Caco-2 (cell line): ENCODE measurements at regions of chr1 and their contacts with region 1.

Region 1: GRCh38 chr1:28322194-28322593 is 6.6 kb upstream of the MED18 start:
- DNase-seq: peak; percentile 68 to 87
- H3K4me3 ChIP-seq: no peak overlapping the region
- H3K4me3 Mint-ChIP-seq: no peak overlapping the region
- H3K27ac Mint-ChIP-seq: no peak overlapping the region
- H3K4me1 ChIP-seq: peaks cover 15% of the 10 kb centered on the region
- H3K4me1 Mint-ChIP-seq: peaks cover 14% of the 10 kb centered on the region
- H3K27me3 ChIP-seq: no peaks in the 10 kb centered on the region
- H3K27me3 Mint-ChIP-seq: no peaks in the 10 kb centered on the region
- CTCF ChIP-seq: no peak

Region 2: DNA sequence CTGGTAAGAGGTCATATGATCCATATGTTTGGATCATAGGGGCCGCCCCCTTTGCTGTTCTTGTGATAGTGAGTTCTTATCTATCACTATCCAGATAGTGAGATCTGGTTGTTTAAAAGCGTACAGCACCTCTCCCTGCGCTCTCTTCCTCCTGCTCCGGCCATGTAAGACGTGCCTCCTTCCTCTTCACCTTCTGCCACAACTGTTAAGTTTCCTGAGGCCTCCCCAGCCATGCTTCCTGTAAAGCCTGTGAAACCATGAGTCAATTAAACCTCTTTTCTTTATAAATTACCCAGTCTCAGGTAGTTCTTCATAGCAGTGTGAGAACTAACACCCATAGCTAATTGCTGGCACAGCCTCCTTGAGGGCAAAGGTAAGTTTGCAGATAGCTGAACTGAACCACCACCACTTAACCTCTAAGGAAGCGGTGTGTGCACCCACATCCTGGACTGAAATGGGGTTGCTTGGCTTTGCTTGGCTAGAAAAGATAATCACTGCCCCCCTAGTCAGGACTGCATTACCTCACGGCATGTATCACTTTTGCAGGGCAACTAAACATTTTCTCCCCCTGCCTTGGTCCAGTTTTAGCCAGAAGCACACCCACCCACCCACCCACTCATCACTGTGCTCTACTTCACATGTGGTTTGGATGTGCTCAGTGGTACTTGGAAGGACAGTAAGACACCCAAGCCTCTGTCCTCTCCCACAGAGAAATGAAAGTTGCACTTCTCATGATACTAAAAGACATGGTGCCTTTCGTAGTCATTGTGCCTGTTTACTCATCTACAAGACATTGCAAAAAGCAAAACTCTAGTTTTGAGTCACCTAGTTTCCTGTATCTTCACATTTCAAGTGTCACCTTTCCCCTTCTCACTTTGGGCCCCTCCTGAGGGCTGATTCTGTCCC is 122.6 kb before region 1 on chr1:
- CTCF ChIA-PET with region 1: no interaction called
- POLR2A ChIA-PET with region 1: no interaction called
- intact Hi-C with region 1: no loop called
- DNase-seq: no peak
- H3K4me3 ChIP-seq: no peak overlapping the region
- H3K4me3 Mint-ChIP-seq: no peak overlapping the region
- H3K27ac Mint-ChIP-seq: peak overlapping the region; percentile 48
- H3K4me1 ChIP-seq: no peaks in the 10 kb centered on the region
- H3K4me1 Mint-ChIP-seq: peaks cover 6% of the 10 kb centered on the region
- H3K27me3 ChIP-seq: no peaks in the 10 kb centered on the region
- H3K27me3 Mint-ChIP-seq: no peaks in the 10 kb centered on the region
- CTCF ChIP-seq: no peak

Region 3: DNA sequence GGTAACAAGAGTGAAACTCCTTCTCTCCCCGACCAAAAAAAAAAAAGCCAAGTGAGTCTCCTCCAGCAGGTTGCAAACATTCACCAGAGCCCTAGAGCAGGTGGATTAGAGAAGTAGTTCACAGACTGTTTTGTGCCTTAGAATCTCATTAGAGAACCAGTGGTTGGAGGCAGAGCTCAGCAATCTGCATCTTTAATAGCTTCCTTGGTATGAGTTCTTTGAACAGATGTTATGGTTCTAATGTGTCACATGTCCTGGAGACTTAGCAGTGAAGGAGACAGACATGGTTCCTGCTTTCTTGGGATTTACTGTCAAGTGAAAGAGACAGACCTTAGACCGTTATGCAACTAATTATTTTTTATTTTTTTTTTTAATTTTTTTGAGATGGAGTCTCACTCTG is 36.1 kb before region 1 on chr1:
- CTCF ChIA-PET with region 1: no interaction called
- POLR2A ChIA-PET with region 1: no interaction called
- intact Hi-C with region 1: loop called (anchors 5 kb)
- DNase-seq: no peak
- H3K4me3 ChIP-seq: no peak overlapping the region
- H3K4me3 Mint-ChIP-seq: no peak overlapping the region
- H3K27ac Mint-ChIP-seq: no peak overlapping the region
- H3K4me1 ChIP-seq: peaks cover 16% of the 10 kb centered on the region
- H3K4me1 Mint-ChIP-seq: peaks cover 7% of the 10 kb centered on the region
- H3K27me3 ChIP-seq: no peaks in the 10 kb centered on the region
- H3K27me3 Mint-ChIP-seq: no peaks in the 10 kb centered on the region
- CTCF ChIP-seq: no peak

Region 4: DNA sequence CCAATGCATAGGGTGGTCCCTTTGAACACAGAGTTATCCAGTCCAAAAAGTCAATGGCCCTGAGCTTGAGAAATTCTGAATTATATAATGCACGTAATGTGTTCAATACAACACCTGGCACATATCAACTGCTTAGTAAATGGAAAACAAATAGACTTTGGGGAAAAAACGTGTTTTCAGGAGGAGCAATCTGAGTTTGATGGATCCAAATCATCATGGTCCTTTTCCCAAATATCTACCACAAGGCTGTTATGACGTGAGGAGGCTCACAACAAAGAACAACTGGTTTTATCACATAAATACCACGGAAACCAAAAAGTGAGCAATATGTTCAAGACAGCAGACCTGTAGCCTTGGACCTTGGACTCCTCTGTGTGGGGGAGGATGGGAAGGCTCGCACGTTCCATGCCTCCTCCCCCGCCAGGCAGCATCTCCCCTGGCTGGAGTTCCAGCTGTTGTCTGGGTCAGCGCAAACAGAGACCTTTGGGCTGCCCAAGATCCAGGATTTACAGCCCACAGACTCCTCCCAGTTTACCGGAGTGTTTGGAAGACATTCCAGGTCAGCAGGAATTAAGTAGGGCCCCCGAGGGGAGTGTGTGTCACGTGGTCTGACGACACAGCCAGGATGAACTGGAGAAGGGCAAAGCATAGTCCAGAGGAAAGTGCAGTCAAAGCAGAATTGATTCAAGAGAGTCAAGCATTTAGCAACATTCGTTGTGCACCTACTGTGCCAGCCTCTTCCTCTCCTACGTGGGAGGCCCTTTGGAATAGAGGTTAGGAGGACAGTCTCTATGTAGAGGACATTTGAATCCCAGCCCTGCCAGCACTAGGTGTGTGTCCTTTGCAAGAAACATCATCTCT is 25.6 kb before region 1 on chr1:
- CTCF ChIA-PET with region 1: no interaction called
- POLR2A ChIA-PET with region 1: interaction called, 3 read pairs
- intact Hi-C with region 1: loop called (anchors 2 kb)
- DNase-seq: peak; percentile 92 to 97
- H3K4me3 ChIP-seq: no peak overlapping the region
- H3K4me3 Mint-ChIP-seq: peak overlapping the region; percentile 56
- H3K27ac Mint-ChIP-seq: peak overlapping the region; percentile 93
- H3K4me1 ChIP-seq: peaks cover 17% of the 10 kb centered on the region
- H3K4me1 Mint-ChIP-seq: peaks cover 12% of the 10 kb centered on the region
- H3K27me3 ChIP-seq: no peaks in the 10 kb centered on the region
- H3K27me3 Mint-ChIP-seq: no peaks in the 10 kb centered on the region
- CTCF ChIP-seq: no peak

Region 5: DNA sequence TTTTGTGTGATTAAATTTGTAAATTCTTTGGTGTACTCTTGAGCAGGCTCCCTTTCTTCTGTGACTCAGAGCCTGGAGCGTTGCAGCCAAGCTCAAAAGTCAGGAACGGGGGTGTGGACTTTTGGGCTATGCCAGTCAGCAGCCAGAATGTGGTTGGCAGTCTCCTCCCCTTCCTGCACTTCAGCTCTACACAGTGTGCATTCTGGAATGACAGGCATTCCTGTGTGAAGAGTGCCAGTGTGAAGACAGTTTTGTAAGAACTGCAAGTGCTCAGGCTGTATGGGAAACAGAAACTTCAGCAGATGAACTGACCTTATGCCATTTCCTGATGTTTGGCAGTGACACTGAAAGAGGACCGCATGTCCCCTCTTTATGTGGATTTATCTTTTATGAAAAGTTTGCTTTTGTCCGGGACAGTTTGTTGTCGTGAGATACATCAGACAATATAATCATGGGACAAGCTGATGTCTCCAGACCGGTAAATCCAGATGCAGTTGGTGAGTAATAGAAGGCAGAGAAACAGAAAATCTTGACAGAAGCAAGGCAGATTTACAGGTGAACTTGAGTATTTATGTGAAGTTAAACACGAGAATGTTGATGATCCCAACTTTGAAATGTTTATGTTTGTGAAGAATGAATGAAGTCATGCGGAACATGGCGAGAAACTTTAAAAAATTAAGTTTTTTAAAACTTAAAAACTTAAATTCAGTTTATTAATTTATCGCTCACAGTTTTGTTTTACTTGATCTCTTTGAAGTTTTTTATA is 115.9 kb after region 1 on chr1:
- CTCF ChIA-PET with region 1: no interaction called
- POLR2A ChIA-PET with region 1: no interaction called
- intact Hi-C with region 1: no loop called
- DNase-seq: peak; percentile 57 to 62
- H3K4me3 ChIP-seq: no peak overlapping the region
- H3K4me3 Mint-ChIP-seq: peak overlapping the region; percentile 62
- H3K27ac Mint-ChIP-seq: peak overlapping the region; percentile 79
- H3K4me1 ChIP-seq: peaks cover 5% of the 10 kb centered on the region; the same call in 1 of the 2 replicates
- H3K4me1 Mint-ChIP-seq: peaks cover 6% of the 10 kb centered on the region
- H3K27me3 ChIP-seq: no peaks in the 10 kb centered on the region
- H3K27me3 Mint-ChIP-seq: no peaks in the 10 kb centered on the region
- CTCF ChIP-seq: no peak

Region 6: DNA sequence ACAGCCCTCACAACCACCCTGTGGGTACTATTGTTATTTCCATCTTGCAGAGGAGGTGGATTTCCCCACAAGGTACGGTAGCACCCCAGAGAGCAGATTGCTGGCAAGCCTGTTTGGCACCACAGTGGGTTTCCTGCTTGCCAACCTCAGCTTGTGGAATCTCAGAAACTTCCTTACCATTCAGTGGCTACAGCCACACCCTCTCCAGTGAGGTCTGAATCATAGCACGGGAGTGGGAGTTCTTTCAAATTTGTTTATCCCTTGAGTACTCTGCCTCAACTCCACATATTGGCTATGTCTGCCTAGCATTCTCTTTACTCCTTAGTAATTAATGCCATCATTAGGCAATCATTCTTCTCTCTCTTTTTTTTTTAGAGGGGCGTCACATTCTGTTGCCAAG is 1076.2 kb after region 1 on chr1:
- CTCF ChIA-PET with region 1: no interaction called
- POLR2A ChIA-PET with region 1: no interaction called
- intact Hi-C with region 1: no loop called
- DNase-seq: no peak
- H3K4me3 ChIP-seq: no peak overlapping the region
- H3K4me3 Mint-ChIP-seq: no peak overlapping the region
- H3K27ac Mint-ChIP-seq: no peak overlapping the region
- H3K4me1 ChIP-seq: no peaks in the 10 kb centered on the region
- H3K4me1 Mint-ChIP-seq: no peaks in the 10 kb centered on the region
- H3K27me3 ChIP-seq: no peaks in the 10 kb centered on the region
- H3K27me3 Mint-ChIP-seq: peaks cover 3% of the 10 kb centered on the region
- CTCF ChIP-seq: no peak